Sigmoid colon (tissue), 7 donors: ENCODE measurements at regions of chr2 and their contacts with region 1.

Region 1: GRCh38 chr2:109632158-109632789 is 18.1 kb downstream of the SOWAHC start:
- DNase-seq: no peak
- H3K4me3 ChIP-seq: no peak overlapping the region
- H3K27ac ChIP-seq: no peak overlapping the region
- H3K4me1 ChIP-seq: peaks cover 0 to 5% (median 0%) of the 10 kb centered on the region in 4 donors
- H3K27me3 ChIP-seq: no peaks in the 10 kb centered on the region
- CTCF ChIP-seq: no peak
- EP300 ChIP-seq: no peak
- POLR2A ChIP-seq: no peak

Region 2: DNA sequence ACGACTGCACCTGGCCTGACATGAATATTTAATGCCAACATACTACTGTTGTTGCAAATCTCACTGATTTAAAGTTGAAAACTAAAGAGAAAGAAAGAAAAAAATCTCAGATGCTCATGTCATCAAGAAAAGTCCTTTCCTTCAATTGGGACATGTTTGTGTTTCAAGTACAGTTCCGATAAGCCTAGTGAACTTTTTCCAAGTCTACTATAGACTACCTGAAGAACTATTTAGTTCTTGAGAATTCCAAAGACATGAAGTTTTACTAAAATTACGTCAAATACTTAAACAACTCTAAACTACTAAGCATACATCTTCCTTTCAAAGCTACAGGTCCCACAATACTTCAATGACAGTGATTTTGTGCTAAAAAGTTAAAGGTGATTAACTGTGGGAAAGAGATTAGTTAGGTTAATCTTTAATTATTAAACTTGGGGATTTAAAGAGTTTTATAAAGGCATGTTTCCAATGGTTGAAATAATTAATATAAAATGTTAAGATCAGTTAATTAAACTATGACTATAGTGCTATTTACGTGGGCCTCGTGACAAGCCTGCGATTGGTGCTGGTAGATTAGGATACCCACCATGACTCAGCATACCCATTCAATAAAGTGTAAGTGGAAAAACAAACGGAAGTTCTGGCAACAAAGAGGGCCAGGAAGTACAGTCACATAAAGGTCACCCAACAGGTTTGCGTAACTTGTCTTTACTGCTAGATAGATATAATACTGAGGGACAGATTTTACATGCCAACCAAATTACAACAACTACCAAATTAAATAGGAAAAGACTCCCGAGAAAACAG is 74.0 kb before region 1 on chr2:
- intact Hi-C with region 1: no loop called
- DNase-seq: no peak
- H3K4me3 ChIP-seq: no peak overlapping the region
- H3K27ac ChIP-seq: peak overlapping the region in 1 of 4 donors; percentile 13
- H3K4me1 ChIP-seq: no peaks in the 10 kb centered on the region
- H3K27me3 ChIP-seq: no peaks in the 10 kb centered on the region
- CTCF ChIP-seq: no peak
- EP300 ChIP-seq: no peak
- POLR2A ChIP-seq: no peak

Region 3: DNA sequence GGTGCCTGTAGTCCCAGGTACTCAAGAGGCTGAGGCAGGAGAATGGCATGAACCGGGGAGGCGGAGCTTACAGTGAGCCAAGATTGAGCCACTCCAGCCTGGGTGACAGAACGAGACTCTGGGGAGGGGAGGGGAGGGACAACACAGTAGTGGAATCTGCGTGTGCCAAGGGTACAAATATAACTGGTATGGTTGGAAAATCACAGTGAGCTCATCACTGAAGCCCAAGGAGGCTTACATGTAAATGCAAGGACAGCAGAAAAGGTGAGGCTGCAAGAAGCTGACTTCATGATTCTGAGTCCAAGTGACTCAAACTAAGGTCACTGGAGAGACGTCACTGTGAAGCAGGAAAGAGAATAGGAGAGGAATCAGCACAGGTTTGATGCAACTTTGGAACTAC is 27.7 kb before region 1 on chr2:
- intact Hi-C with region 1: no loop called
- DNase-seq: no peak
- H3K4me3 ChIP-seq: no peak overlapping the region
- H3K27ac ChIP-seq: no peak overlapping the region
- H3K4me1 ChIP-seq: peaks cover 0 to 66% (median 49%) of the 10 kb centered on the region in 4 donors
- H3K27me3 ChIP-seq: no peaks in the 10 kb centered on the region
- CTCF ChIP-seq: no peak
- EP300 ChIP-seq: no peak
- POLR2A ChIP-seq: no peak

Region 4: DNA sequence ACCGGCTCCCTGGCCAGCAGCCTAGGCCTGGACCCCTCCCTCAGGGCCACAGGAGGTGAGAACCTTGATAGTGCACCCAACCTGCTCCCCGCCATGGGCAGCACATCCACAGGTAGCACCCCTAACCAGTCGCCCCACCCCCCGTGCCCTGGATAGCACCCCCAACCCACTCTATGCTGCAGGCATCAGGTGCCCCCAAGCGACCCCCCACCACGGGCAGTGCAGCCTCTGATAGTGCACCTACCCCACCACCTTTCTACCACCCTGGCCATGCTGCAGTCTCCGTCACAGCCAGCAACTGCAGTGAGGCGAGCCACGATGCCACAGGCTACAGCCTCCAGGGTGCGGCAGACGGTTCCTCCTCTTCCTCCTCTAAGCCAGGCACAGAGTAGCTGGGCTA is 37.5 kb after region 1 on chr2:
- intact Hi-C with region 1: loop called (anchors 5 kb)
- DNase-seq: peak; percentile 61
- H3K4me3 ChIP-seq: no peak overlapping the region
- H3K27ac ChIP-seq: no peak overlapping the region
- H3K4me1 ChIP-seq: no peaks in the 10 kb centered on the region
- H3K27me3 ChIP-seq: no peaks in the 10 kb centered on the region
- CTCF ChIP-seq: no peak
- EP300 ChIP-seq: no peak
- POLR2A ChIP-seq: no peak